Prostate gland (tissue), 2 donors: ENCODE measurements at regions of chr13 and their contacts with region 1.

Region 1: GRCh38 chr13:91133941-91134802 is 213.3 kb upstream of the MIR17HG start:
- DNase-seq: peak; percentile 56
- H3K4me3 ChIP-seq: no peak overlapping the region
- H3K27ac ChIP-seq: no peak overlapping the region
- H3K4me1 ChIP-seq: no peaks in the 10 kb centered on the region
- H3K27me3 ChIP-seq: no peaks in the 10 kb centered on the region
- CTCF ChIP-seq: peak; percentile 42 to 75 (median 70)
- POLR2A ChIP-seq: no peak

Region 2: GRCh38 chr13:91185294-91185863 is 51.2 kb after region 1 on chr13:
- intact Hi-C with region 1: loop called (anchors 2 kb)
- DNase-seq: no peak
- H3K4me3 ChIP-seq: no peak overlapping the region
- H3K27ac ChIP-seq: no peak overlapping the region
- H3K4me1 ChIP-seq: no peaks in the 10 kb centered on the region
- H3K27me3 ChIP-seq: no peaks in the 10 kb centered on the region
- CTCF ChIP-seq: peak in 3 of 4 experiments; percentile 24 to 51 (median 40)
- POLR2A ChIP-seq: no peak